Mammary epithelial cell (primary cell): ENCODE measurements at regions of chr15 and their contacts with region 1.

Region 1: GRCh38 chr15:50150851-50151250 is 31.1 kb upstream of the SLC27A2 start:
- DNase-seq: no peak
- H3K4me3 ChIP-seq: no peak overlapping the region
- H3K27ac ChIP-seq: no peak overlapping the region
- H3K4me1 ChIP-seq: peaks cover 10% of the 10 kb centered on the region
- H3K27me3 ChIP-seq: no peaks in the 10 kb centered on the region
- CTCF ChIP-seq: no peak

Region 2: GRCh38 chr15:50044904-50045303 is 105.9 kb before region 1 on chr15:
- CTCF ChIA-PET with region 1: no interaction called
- dilution Hi-C with region 1: no loop called
- in situ Hi-C with region 1: no loop called
- intact Hi-C with region 1: no loop called
- DNase-seq: no peak
- H3K4me3 ChIP-seq: no peak overlapping the region
- H3K27ac ChIP-seq: no peak overlapping the region
- H3K4me1 ChIP-seq: no peaks in the 10 kb centered on the region
- H3K27me3 ChIP-seq: no peaks in the 10 kb centered on the region
- CTCF ChIP-seq: no peak

Region 3: DNA sequence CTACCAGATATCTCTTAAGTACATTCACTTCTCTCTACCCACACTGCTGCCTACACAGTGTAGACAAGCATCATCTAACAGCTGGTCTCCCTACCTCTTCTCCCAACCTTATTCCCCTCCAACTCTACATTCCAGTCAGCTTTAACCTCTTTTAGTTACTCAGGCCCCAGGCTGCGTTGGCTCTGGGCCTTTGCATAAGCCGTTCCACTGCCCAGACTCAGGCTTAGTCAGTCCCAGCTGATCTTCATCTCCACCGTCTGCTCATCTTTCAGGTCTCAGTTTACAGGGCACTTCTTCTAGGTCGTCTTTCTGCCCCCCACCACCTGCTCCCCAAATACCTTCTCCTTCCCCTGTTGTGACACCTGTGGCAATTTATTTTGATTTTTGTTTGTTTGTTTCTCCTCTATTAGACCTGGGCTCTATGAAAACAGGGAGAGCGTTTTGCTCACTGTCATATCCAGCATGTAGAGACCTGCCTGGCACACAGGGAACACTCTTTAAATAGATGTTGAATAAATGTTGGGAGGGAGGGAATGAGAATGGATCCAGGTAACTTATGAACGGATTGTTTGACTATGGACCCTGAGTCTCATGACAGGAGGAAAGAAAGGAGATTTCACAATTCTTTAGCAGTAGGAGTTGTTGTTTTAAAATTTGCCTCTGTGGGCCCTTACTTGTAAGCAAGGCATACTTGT is 42.2 kb after region 1 on chr15:
- CTCF ChIA-PET with region 1: interaction called, 10 read pairs
- dilution Hi-C with region 1: no loop called
- in situ Hi-C with region 1: no loop called
- intact Hi-C with region 1: no loop called
- DNase-seq: peak; percentile 77
- H3K4me3 ChIP-seq: no peak overlapping the region
- H3K27ac ChIP-seq: peak overlapping the region; percentile 13
- H3K4me1 ChIP-seq: peaks cover 11% of the 10 kb centered on the region
- H3K27me3 ChIP-seq: no peaks in the 10 kb centered on the region
- CTCF ChIP-seq: no peak